ENCODE measurements at regions of chr1 and their contacts with region 1.

Region 1: GRCh38 chr1:203340112-203340804 is 10.7 kb downstream of the FMOD start:
- DNase-seq: no peak
- H3K4me3 ChIP-seq: no peak overlapping the region
- CTCF ChIP-seq: peak; percentile 83

Region 2: DNA sequence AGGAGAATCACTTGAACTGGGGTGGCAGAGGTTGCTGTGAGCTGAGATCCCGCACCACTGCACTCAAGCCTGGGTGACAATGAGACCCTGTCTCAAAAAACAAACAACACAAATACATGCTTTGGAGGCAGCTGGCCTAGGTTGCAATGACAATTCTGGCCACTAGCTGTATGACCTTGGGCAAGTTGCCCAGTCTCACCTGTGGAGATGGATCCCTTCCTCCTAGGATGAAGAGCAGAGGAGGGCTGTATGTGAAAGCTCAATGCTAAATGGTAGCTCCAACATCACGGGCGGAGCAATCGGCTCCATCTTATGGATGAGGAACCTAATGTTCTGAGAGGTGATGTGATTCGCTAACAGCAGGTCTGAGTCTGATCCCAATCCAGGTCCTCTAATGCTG is 192.1 kb before region 1 on chr1:
- CTCF ChIA-PET with region 1: no interaction called
- POLR2A ChIA-PET with region 1: no interaction called
- DNase-seq: no peak
- H3K4me3 ChIP-seq: no peak overlapping the region
- CTCF ChIP-seq: peak; percentile 3

Region 3: DNA sequence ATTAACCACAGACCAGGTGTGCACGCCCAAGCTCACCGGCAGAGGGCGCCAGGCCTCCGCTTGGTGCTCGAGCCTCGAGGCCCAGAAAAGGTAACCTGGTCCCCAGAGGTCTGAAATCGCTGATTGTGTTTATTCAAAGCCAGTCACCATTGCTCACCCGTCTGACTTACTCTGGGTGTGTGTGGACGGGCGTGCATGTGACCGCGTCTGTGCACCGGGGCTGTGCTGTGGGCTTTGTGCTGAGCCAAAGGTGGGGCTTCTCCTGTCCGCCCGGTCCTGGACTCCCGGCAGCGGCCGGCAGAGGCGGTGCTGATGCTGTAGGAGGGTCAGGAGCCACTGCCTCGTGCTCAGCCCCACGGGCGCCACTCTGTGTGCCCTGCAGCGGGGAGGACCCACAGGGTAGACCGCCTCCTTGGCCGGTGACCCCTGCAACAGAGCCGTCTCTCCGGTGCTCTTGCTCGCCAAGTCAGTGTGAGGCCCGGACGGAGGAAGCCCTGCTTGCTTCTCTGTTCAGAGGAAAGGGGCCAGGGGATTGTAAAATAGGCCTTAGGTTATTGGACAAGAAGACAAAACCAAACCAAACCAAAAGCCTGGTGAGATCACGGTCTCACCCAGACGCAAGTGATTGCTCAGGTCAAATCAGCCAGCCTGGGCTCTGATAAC is 66.9 kb before region 1 on chr1:
- CTCF ChIA-PET with region 1: interaction called, 429 read pairs
- POLR2A ChIA-PET with region 1: no interaction called
- DNase-seq: peak; percentile 17
- H3K4me3 ChIP-seq: peak overlapping the region; percentile 25
- CTCF ChIP-seq: peak; percentile 96

Region 4: DNA sequence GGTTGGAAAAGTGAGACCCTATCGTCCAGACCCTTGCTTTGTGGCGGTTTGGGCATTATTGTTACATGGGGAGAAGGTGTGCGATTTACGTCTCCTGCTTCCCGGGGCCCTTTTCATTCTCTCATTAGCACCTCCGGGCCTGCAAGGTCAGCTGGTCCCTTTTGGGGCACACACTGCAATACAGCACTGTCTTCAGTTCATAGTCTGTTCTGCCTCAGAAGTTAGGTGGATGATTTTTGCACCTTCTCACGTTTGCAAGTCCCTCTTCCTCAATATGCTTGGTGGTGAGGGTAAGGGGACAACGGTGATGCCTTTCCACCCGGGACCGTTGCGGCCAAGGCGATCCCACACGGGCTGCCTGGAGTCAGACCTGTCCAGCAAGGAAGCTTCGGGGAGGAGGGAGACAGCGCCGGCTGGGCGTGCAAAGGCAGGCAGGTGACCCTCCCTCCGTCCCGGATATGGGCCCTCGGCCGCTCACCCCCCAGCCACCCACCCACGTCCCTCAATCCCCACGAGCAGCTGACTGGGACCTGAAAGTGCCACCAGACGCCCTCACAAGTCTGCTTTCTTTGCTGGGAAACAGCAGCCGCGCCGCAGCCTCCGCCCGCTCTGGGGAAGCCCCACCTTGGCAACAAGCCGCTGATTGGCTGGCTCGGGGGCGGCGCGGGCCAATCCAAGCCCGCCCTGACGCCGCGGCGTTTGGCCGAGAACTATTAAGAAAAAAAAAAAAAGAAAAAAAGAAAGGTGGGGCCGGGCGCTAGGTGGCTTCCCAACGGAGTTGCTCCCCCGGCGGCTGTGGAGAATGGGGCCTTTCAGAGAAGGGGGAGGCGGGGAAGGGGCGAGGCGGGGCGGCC is 13.2 kb before region 1 on chr1:
- CTCF ChIA-PET with region 1: interaction called, 360 read pairs
- POLR2A ChIA-PET with region 1: no interaction called
- DNase-seq: no peak
- H3K4me3 ChIP-seq: peak overlapping the region; percentile 63
- CTCF ChIP-seq: no peak

Region 5: GRCh38 chr1:203440771-203441170 is 100.5 kb after region 1 on chr1:
- CTCF ChIA-PET with region 1: interaction called, 189 read pairs
- POLR2A ChIA-PET with region 1: no interaction called
- DNase-seq: peak; percentile 37
- H3K4me3 ChIP-seq: no peak overlapping the region
- CTCF ChIP-seq: peak; percentile 73

Region 6: GRCh38 chr1:203463469-203464062 is 123.3 kb after region 1 on chr1:
- CTCF ChIA-PET with region 1: interaction called, 28 read pairs
- POLR2A ChIA-PET with region 1: no interaction called
- DNase-seq: no peak
- H3K4me3 ChIP-seq: no peak overlapping the region
- CTCF ChIP-seq: peak; percentile 21

Region 7: GRCh38 chr1:203702130-203702577 is 361.9 kb after region 1 on chr1:
- CTCF ChIA-PET with region 1: interaction called, 75 read pairs
- POLR2A ChIA-PET with region 1: no interaction called
- DNase-seq: no peak
- H3K4me3 ChIP-seq: no peak overlapping the region
- CTCF ChIP-seq: peak; percentile 68